PC-9 (cell line): ENCODE measurements at regions of chr2 and their contacts with region 1.

Region 1: DNA sequence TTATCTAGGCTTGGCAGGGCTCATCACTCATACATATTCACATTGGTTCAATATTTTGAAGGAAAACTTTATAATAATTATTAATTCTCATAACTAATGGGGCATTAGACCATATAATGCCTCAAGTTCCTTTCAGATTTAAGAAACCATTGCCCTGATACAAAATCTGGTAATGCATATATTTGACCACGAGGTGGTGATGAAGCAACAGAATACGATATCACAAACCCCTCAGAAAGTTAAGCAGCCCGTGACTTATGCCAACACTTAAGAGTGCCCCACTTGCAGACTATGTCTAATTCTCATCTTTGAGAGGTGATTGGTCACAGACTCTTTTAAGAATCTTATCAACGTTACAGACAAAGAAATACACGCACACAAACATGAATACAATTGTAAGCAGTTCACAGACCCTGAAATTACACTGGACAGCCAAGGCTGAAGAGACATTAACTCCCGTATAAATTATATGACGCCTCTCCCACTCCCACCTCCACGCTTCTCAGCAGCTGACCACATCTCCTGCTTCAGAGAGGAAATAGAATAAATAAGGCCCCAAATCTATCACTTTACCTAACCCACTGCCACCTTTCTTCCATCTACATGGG is 20.7 kb upstream of the DNAH6 start:
- DNase-seq: no peak
- H3K4me3 ChIP-seq: no peak overlapping the region
- H3K27ac ChIP-seq: no peak overlapping the region
- H3K4me1 ChIP-seq: no peaks in the 10 kb centered on the region
- H3K27me3 ChIP-seq: no peaks in the 10 kb centered on the region
- CTCF ChIP-seq: peak; percentile 76

Region 2: GRCh38 chr2:84516234-84516986 is 20.8 kb after region 1 on chr2 and contains the start of gene DNAH6:
- CTCF ChIA-PET with region 1: interaction called, 12 read pairs
- POLR2A ChIA-PET with region 1: no interaction called
- intact Hi-C with region 1: no loop called
- DNase-seq: peak in 1 of 2 experiments; percentile 61
- H3K4me3 ChIP-seq: no peak within 1 kb of the TSS
- H3K27ac ChIP-seq: no peak within 1 kb of the TSS
- H3K4me1 ChIP-seq: no peaks in the 10 kb centered on the region
- H3K27me3 ChIP-seq: peaks cover 33% of the 10 kb centered on the region
- CTCF ChIP-seq: no peak
- total RNA-seq, gene DNAH6: not detected in 2 replicates

Region 3: GRCh38 chr2:84539729-84540128 is 44.1 kb after region 1 on chr2:
- CTCF ChIA-PET with region 1: no interaction called
- POLR2A ChIA-PET with region 1: no interaction called
- intact Hi-C with region 1: no loop called
- DNase-seq: no peak
- H3K4me3 ChIP-seq: no peak overlapping the region
- H3K27ac ChIP-seq: no peak overlapping the region
- H3K4me1 ChIP-seq: no peaks in the 10 kb centered on the region
- H3K27me3 ChIP-seq: no peaks in the 10 kb centered on the region; the same call in 1 of the 2 replicates
- CTCF ChIP-seq: no peak

Region 4: GRCh38 chr2:84631047-84631446 is 135.4 kb after region 1 on chr2:
- CTCF ChIA-PET with region 1: no interaction called
- POLR2A ChIA-PET with region 1: no interaction called
- intact Hi-C with region 1: loop called (anchors 10 kb)
- DNase-seq: peak in 1 of 2 experiments; percentile 41
- H3K4me3 ChIP-seq: no peak overlapping the region
- H3K27ac ChIP-seq: no peak overlapping the region
- H3K4me1 ChIP-seq: no peaks in the 10 kb centered on the region
- H3K27me3 ChIP-seq: 0 out of 2 replicates have a peak, but pooled peaks cover 12% of the 10 kb centered on the region
- CTCF ChIP-seq: peak; percentile 71

Region 5: GRCh38 chr2:84881581-84882414 is 386.2 kb after region 1 on chr2:
- CTCF ChIA-PET with region 1: no interaction called
- POLR2A ChIA-PET with region 1: no interaction called
- intact Hi-C with region 1: loop called (anchors 1 kb)
- DNase-seq: peak; percentile 62 to 63
- H3K4me3 ChIP-seq: peak overlapping the region; percentile 59
- H3K27ac ChIP-seq: no peak overlapping the region
- H3K4me1 ChIP-seq: 0 out of 2 replicates have a peak, but pooled peaks cover 4% of the 10 kb centered on the region
- H3K27me3 ChIP-seq: peaks cover 41% of the 10 kb centered on the region
- CTCF ChIP-seq: peak; percentile 79